Endothelial cell of umbilical vein (primary cell): ENCODE measurements at regions of chr16 and their contacts with region 1.

Region 1: GRCh38 chr16:81940781-81941560 is 70.3 kb downstream of the SDR42E1 start:
- DNase-seq: peak; percentile 70
- H3K4me3 ChIP-seq: no peak overlapping the region
- H3K27ac ChIP-seq: no peak overlapping the region
- H3K4me1 ChIP-seq: no peaks in the 10 kb centered on the region
- H3K27me3 ChIP-seq: no peaks in the 10 kb centered on the region
- CTCF ChIP-seq: peak; percentile 37 to 47
- POLR2A ChIP-seq: no peak

Region 2: GRCh38 chr16:81891736-81892357 is 49.1 kb before region 1 on chr16:
- CTCF ChIA-PET with region 1: interaction called, 14 read pairs
- POLR2A ChIA-PET with region 1: no interaction called
- dilution Hi-C with region 1: no loop called
- intact Hi-C with region 1: loop called (anchors 1 kb)
- DNase-seq: no peak
- H3K4me3 ChIP-seq: no peak overlapping the region
- H3K27ac ChIP-seq: no peak overlapping the region
- H3K4me1 ChIP-seq: peaks cover 4% of the 10 kb centered on the region
- H3K27me3 ChIP-seq: no peaks in the 10 kb centered on the region
- CTCF ChIP-seq: no peak
- POLR2A ChIP-seq: no peak

Region 3: GRCh38 chr16:82016263-82016662 is 75.3 kb after region 1 on chr16:
- CTCF ChIA-PET with region 1: no interaction called
- POLR2A ChIA-PET with region 1: no interaction called
- dilution Hi-C with region 1: no loop called
- intact Hi-C with region 1: loop called (anchors 2 kb)
- DNase-seq: peak; percentile 90
- H3K4me3 ChIP-seq: peak overlapping the region in 1 of 3 experiments; percentile 45
- H3K27ac ChIP-seq: no peak overlapping the region
- H3K4me1 ChIP-seq: peaks cover 9% of the 10 kb centered on the region
- H3K27me3 ChIP-seq: peaks cover 4 to 15% of the 10 kb centered on the region in 2 experiments
- CTCF ChIP-seq: peak; percentile 52 to 58
- POLR2A ChIP-seq: no peak

Region 4: DNA sequence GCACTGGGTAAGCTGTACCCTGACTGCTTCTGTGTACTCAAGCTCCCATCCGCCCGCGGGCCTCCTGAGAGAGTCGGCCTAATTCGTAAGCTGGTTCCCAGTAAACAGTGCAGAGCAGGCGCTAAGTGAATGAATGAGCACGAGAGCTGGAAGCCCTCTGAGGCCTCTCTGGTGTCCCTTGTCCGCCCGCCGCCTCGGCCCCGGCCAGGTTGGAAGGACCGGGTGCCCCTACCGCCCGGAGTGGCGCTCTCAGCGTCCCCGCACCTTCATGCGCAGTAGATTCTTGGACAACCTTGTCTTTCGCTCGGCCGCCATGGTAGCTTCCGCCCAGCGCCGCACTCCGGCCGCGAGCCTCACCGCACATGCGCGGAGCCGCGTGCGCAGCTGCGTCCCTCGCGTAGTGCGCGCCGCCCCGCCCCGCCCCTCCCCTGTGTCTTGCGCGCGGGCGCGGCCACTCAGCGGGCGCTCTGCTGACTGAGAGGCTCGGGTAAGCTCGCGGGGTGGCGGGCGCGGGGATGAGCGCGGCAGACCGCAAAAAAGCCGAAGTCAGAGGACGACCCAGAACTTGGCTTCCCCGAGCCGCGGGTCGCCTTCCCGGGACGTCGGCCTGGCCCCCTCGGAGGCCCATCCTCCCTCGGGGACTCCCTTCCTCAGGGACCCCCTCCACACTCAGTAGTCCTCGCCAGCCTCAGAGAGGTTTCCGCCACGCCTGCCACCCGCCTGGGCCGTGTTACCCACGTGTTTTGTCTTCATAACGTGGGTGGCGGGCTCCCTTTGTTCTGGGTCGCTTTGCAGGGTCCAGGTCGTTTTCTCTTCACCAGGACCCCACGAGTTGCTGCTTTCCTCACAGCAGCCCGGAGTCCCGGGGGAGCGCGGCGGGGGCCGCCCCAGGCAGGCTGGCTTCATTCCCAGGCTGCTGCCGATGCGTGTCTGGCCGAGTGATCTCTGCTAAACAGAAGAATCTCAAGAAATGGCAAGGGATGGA is 229.2 kb after region 1 on chr16 and contains the start of gene MPHOSPH6:
- CTCF ChIA-PET with region 1: interaction called, 3 read pairs
- POLR2A ChIA-PET with region 1: no interaction called
- dilution Hi-C with region 1: no loop called
- intact Hi-C with region 1: loop called (anchors 1 kb)
- DNase-seq: peak; percentile 92
- H3K4me3 ChIP-seq: peak within 1 kb of the TSS; percentile 63 to 92 (median 86)
- H3K27ac ChIP-seq: peak within 1 kb of the TSS; percentile 72
- H3K4me1 ChIP-seq: peaks cover 12% of the 10 kb centered on the region
- H3K27me3 ChIP-seq: peaks cover 9 to 17% of the 10 kb centered on the region in 2 experiments
- CTCF ChIP-seq: no peak
- POLR2A ChIP-seq: peak; percentile 74
- total RNA-seq, gene MPHOSPH6: 32.0 and 32.5 TPM in 2 replicates